MCF 10A (cell line): ENCODE measurements at regions of chr11 and their contacts with region 1.

Region 1: DNA sequence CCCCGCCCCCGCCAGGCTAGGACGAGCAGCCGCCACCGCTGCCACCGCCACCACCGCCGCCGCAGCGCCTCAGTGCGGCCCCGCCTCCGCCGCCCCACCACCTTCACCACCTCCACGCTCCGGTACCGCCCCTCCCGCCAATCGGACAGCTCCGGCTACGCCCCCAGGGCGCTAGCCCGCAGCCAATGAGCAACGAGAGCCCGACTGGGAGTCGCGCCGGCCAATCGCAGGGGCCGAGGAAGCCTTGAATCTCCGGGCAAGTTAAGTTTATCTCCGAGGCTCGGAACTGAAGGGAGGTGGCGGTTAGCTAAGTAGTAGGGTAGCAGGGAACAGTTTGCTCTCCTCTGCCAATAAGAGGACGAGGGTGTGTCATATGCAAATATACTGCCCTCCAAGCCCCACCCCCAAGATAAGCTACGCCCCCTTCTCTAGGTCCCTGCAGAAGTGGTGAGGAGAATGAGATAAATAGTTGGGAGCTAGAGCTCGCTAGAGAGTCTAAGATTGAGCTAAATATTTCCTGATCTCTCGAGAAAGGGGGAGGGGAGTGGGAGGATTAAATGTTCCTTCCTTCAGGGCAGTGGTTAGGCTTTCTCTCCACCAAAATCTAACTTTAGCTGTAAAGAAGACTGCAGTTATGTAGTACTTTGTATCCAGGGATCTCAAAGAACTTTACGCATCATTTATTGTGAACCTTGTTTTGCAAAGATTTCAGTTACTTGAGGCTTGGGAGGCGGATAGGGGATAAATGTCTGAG is at the start of gene SESN3:
- DNase-seq: peak; percentile 97
- H3K4me3 Mint-ChIP-seq: no peak within 1 kb of the TSS
- H3K27ac Mint-ChIP-seq: peak within 1 kb of the TSS; percentile 23
- H3K4me1 Mint-ChIP-seq: peaks cover 19% of the 10 kb centered on the region
- H3K27me3 Mint-ChIP-seq: no peaks in the 10 kb centered on the region
- CTCF ChIP-seq: no peak
- total RNA-seq, gene SESN3: 3.0 and 6.3 TPM in 2 replicates

Region 2: DNA sequence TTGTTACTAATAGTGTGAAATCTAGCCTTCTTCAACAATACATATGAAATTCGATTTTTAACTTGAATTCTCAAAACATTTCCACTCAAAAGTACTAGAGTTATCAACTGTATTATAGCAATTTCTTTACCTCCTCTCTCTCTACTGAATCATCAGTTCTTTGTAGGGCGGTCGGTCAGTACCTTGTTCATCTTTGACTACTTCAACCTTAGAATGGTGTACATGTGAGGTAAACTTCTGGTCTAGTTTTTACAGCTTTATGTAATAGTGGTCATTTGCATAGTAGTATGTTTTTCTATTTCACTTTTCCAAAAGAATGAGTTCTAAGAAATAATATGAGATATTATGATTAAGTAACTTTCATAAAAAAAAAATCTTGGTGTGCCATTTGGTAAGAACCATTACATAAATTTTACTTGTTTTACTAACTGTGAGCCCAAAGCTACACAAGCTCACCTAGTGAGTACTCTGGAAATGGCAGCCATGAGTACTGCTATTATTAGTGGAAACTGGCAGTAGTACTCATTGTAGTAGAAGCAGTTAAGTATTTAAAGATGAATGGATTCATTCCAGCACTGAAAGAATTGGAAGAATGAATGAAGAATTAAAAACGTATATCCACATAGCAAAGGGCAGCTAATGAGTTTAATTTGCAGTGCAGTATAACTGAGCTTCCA is 30.4 kb before region 1 on chr11:
- CTCF ChIA-PET with region 1: interaction called, 3 read pairs
- POLR2A ChIA-PET with region 1: interaction called, 12 read pairs
- intact Hi-C with region 1: no loop called
- DNase-seq: no peak
- H3K4me3 Mint-ChIP-seq: no peak overlapping the region
- H3K27ac Mint-ChIP-seq: no peak overlapping the region
- H3K4me1 Mint-ChIP-seq: no peaks in the 10 kb centered on the region
- H3K27me3 Mint-ChIP-seq: no peaks in the 10 kb centered on the region
- CTCF ChIP-seq: no peak

Region 3: DNA sequence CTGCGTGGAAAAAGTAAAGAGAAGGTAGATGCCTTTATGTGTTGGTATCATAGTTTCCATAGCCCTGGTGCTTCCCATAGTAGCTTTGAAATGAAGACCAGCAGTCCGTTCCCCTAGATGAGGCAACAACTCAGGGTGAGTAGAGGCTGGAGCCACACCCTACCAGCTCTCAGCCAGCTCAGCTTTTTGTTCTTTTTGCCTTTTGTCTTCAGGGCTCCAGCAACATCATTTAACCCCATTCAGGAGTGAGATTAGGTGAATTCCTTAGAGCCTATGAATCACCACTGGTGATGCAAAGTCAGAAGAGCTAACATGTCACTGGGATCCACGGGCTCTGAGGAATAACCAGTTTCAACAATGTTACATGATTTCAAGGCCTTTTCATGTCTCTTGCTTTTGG is 13.7 kb after region 1 on chr11:
- CTCF ChIA-PET with region 1: interaction called, 8 read pairs
- POLR2A ChIA-PET with region 1: interaction called, 52 read pairs
- intact Hi-C with region 1: no loop called
- DNase-seq: peak; percentile 87
- H3K4me3 Mint-ChIP-seq: no peak overlapping the region
- H3K27ac Mint-ChIP-seq: no peak overlapping the region
- H3K4me1 Mint-ChIP-seq: peaks cover 14% of the 10 kb centered on the region
- H3K27me3 Mint-ChIP-seq: no peaks in the 10 kb centered on the region
- CTCF ChIP-seq: no peak

Region 4: GRCh38 chr11:95453616-95454171 is 222.4 kb after region 1 on chr11:
- CTCF ChIA-PET with region 1: interaction called, 7 read pairs
- POLR2A ChIA-PET with region 1: interaction called, 3 read pairs
- intact Hi-C with region 1: loop called (anchors 5 kb)
- DNase-seq: peak; percentile 45
- H3K4me3 Mint-ChIP-seq: no peak overlapping the region
- H3K27ac Mint-ChIP-seq: no peak overlapping the region
- H3K4me1 Mint-ChIP-seq: peaks cover 14% of the 10 kb centered on the region
- H3K27me3 Mint-ChIP-seq: no peaks in the 10 kb centered on the region
- CTCF ChIP-seq: no peak

Region 5: DNA sequence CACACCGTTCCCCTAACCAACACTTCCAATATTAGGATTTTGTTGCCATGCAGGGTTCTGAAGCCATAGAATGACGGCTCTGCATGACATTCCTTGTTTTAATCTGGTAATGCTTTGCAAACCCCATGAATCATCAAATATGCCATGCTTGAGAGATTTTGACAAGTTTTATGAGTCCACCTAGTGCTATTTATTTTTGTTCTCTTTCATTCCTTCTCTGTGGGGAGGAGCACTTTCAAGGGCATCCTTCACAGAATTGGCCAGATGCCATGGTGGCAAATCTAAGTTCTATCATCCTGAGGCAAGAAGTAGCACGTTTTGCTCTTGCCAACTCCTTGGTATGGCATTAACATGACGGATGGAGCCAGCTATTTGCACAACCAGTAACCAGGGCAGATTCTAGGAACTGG is 289.8 kb after region 1 on chr11:
- CTCF ChIA-PET with region 1: no interaction called
- POLR2A ChIA-PET with region 1: interaction called, 11 read pairs
- intact Hi-C with region 1: loop called (anchors 1 kb)
- DNase-seq: peak; percentile 89
- H3K4me3 Mint-ChIP-seq: no peak overlapping the region
- H3K27ac Mint-ChIP-seq: peak overlapping the region; percentile 50
- H3K4me1 Mint-ChIP-seq: peaks cover 32% of the 10 kb centered on the region
- H3K27me3 Mint-ChIP-seq: no peaks in the 10 kb centered on the region
- CTCF ChIP-seq: no peak

Region 6: GRCh38 chr11:95705485-95706124 is 474.3 kb after region 1 on chr11:
- CTCF ChIA-PET with region 1: interaction called, 26 read pairs
- POLR2A ChIA-PET with region 1: interaction called, 11 read pairs
- intact Hi-C with region 1: loop called (anchors 1 kb)
- DNase-seq: peak; percentile 83
- H3K4me3 Mint-ChIP-seq: no peak overlapping the region
- H3K27ac Mint-ChIP-seq: no peak overlapping the region
- H3K4me1 Mint-ChIP-seq: peaks cover 6% of the 10 kb centered on the region
- H3K27me3 Mint-ChIP-seq: no peaks in the 10 kb centered on the region
- CTCF ChIP-seq: peak; percentile 96